Activated B cell treated with CpG ODN at 0.5 μM for 24 hours (primary cell): ENCODE measurements at regions of chr17 and their contacts with region 1.

Region 1: GRCh38 chr17:57521606-57522005 is 223.5 kb downstream of the CCDC182 start:
- DNase-seq: no peak
- ATAC-seq: no peak
- H3K4me3 Mint-ChIP-seq: no peak overlapping the region
- H3K27ac Mint-ChIP-seq: no peak overlapping the region
- H3K4me1 Mint-ChIP-seq: peaks cover 40% of the 10 kb centered on the region
- H3K27me3 Mint-ChIP-seq: no peaks in the 10 kb centered on the region
- CTCF ChIP-seq: no peak

Region 2: DNA sequence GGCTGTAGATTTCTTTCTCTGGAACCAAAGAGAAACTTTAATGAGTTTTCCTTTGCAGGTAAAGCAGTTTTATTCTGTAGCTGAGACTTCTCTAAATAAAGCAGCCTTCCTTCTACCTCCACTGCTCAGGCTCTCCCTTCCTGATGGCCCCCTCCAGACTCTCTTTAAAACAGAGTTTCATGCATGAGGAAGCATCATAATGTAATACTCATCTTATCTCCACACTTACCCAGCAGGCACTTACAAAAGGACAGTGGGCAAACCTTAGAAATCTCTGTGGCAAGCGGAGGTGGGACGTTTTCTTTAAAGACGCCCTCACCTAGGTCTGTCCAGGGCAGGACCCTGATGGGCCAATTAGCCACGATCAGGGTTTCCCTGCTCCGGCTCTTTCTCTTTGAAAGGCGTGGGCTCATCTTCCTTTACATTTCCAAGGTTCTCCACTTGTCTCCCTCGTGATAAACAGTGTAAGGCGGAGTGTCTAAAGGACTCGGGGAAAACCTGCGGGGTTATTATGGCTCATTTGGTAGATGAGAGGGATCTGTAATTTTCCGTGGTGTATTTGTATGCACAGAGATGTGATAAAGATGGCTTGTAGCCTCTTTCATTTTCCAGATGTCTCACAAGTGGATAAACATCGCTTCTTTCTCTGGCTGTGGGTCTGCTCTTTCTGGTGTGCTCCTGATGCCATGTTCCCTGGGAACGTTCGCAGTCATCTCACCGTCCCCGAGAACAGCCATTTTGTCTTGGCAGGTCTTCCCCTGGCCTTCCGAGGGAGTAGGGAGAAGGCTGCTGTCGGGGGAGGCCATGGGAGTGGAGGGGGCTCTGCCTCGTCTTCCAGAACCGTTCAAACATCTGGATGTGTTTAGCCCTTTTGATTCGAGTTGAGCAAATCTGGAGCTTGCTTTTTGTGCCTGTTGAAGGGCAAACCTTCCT is 15.5 kb before region 1 on chr17:
- CTCF ChIA-PET with region 1: no interaction called
- POLR2A ChIA-PET with region 1: no interaction called
- intact Hi-C with region 1: loop called (anchors 2 kb)
- DNase-seq: no peak
- ATAC-seq: no peak
- H3K4me3 Mint-ChIP-seq: no peak overlapping the region
- H3K27ac Mint-ChIP-seq: no peak overlapping the region
- H3K4me1 Mint-ChIP-seq: peaks cover 28% of the 10 kb centered on the region
- H3K27me3 Mint-ChIP-seq: no peaks in the 10 kb centered on the region
- CTCF ChIP-seq: no peak